ENCODE measurements at regions of chr13 and their contacts with region 1.

Region 1: DNA sequence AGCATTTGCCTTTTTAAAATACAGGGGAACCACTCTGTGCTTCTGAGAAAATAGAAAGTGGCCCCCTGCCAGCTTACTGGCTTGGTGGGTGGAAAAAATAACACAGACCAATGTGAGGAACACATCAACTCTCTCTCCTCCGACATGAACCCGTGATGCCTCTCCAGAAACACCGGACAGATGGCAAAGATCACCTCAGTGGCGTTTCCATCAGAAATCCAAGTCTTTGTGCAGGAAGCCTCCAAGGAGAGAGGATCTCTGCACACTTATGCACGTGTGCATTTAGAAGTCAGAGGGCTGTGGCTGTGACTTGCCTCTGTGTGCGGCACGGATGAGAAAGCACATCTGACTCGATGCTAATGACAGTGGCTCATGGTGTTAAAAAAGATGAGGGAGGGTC is 112.3 kb upstream of the KLF12 start:
- DNase-seq: peak in 5 of 14 experiments; percentile 13 to 44 (median 27)
- ATAC-seq: no peak
- H3K4me3 ChIP-seq: peak overlapping the region; percentile 13
- H3K4me3 Mint-ChIP-seq: peak overlapping the region; percentile 68
- H3K27ac ChIP-seq: peak overlapping the region; percentile 59 to 78
- H3K27ac Mint-ChIP-seq: peak overlapping the region; percentile 91
- H3K4me1 ChIP-seq: peaks cover 71% of the 10 kb centered on the region
- H3K4me1 Mint-ChIP-seq: peaks cover 95% of the 10 kb centered on the region
- H3K27me3 ChIP-seq: no peaks in the 10 kb centered on the region
- H3K27me3 Mint-ChIP-seq: no peaks in the 10 kb centered on the region
- CTCF ChIP-seq: no peak

Region 2: GRCh38 chr13:74203576-74203975 is 42.9 kb before region 1 on chr13:
- CTCF ChIA-PET with region 1: no interaction called
- POLR2A ChIA-PET with region 1: interaction called, 3 read pairs
- intact Hi-C with region 1: loop called in 1 of 2 experiments (anchors 5 kb)
- DNase-seq: no peak
- ATAC-seq: no peak
- H3K4me3 ChIP-seq: no peak overlapping the region
- H3K4me3 Mint-ChIP-seq: no peak overlapping the region
- H3K27ac ChIP-seq: no peak overlapping the region
- H3K27ac Mint-ChIP-seq: no peak overlapping the region
- H3K4me1 ChIP-seq: no peaks in the 10 kb centered on the region
- H3K4me1 Mint-ChIP-seq: no peaks in the 10 kb centered on the region
- H3K27me3 ChIP-seq: no peaks in the 10 kb centered on the region
- H3K27me3 Mint-ChIP-seq: no peaks in the 10 kb centered on the region
- CTCF ChIP-seq: no peak

Region 3: GRCh38 chr13:74280795-74281490 is 34.5 kb after region 1 on chr13:
- CTCF ChIA-PET with region 1: no interaction called
- POLR2A ChIA-PET with region 1: interaction called, 32 read pairs
- intact Hi-C with region 1: loop called (anchors 2 to 5 kb)
- DNase-seq: no peak
- ATAC-seq: no peak
- H3K4me3 ChIP-seq: no peak overlapping the region
- H3K4me3 Mint-ChIP-seq: no peak overlapping the region
- H3K27ac ChIP-seq: no peak overlapping the region
- H3K27ac Mint-ChIP-seq: no peak overlapping the region
- H3K4me1 ChIP-seq: peaks cover 7% of the 10 kb centered on the region
- H3K4me1 Mint-ChIP-seq: peaks cover 61% of the 10 kb centered on the region
- H3K27me3 ChIP-seq: no peaks in the 10 kb centered on the region
- H3K27me3 Mint-ChIP-seq: no peaks in the 10 kb centered on the region
- CTCF ChIP-seq: no peak

Measured in CD4-positive, alpha-beta T cell (primary cell).